H1 (cell line): ENCODE measurements at regions of chr15 and their contacts with region 1.

Region 1: DNA sequence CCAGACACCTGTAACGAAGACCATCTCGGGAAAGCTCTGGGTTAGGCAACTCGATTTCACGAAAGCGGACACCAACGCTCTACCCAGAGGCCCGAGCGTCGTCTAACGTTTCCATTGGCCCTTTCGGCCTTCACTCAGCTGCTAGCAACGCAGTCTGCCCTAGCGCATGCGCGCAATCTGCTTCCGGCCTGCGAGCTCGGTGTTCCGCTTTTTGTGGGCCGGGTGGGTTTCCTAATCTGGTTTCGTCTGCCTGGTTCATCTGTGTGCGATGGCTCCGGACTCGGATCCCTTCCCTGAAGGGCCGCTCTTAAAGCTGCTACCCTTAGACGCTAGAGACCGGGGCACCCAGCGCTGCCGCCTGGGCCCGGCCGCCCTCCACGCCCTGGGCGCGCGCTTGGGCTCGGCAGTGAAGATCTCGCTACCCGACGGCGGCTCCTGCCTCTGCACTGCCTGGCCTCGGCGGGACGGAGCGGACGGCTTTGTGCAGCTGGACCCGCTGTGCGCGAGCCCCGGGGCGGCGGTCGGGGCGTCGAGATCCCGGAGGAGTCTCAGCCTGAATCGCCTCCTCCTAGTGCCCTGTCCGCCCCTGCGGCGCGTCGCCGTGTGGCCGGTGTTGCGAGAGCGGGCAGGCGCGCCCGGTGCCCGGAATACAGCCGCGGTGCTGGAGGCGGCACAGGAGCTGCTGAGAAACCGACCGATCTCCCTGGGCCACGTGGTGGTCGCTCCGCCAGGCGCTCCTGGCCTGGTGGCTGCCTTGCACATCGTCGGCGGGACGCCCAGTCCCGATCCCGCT is 24.0 kb upstream of the GATM start:
- DNase-seq: peak; percentile 93 to 94
- H3K4me3 ChIP-seq: peak overlapping the region; percentile 81 to 99 (median 85)
- H3K27ac ChIP-seq: peak overlapping the region; percentile 88
- H3K4me1 ChIP-seq: peaks cover 0 to 7% (median 0%) of the 10 kb centered on the region in 4 experiments; a peak in 2 of 7 replicates
- H3K27me3 ChIP-seq: no peaks in the 10 kb centered on the region
- CTCF ChIP-seq: no peak
- EP300 ChIP-seq: no peak
- POLR2A ChIP-seq: peak in 1 of 2 experiments; percentile 75; a peak in 2 of 3 replicates
- RAD21 ChIP-seq: no peak

Region 2: DNA sequence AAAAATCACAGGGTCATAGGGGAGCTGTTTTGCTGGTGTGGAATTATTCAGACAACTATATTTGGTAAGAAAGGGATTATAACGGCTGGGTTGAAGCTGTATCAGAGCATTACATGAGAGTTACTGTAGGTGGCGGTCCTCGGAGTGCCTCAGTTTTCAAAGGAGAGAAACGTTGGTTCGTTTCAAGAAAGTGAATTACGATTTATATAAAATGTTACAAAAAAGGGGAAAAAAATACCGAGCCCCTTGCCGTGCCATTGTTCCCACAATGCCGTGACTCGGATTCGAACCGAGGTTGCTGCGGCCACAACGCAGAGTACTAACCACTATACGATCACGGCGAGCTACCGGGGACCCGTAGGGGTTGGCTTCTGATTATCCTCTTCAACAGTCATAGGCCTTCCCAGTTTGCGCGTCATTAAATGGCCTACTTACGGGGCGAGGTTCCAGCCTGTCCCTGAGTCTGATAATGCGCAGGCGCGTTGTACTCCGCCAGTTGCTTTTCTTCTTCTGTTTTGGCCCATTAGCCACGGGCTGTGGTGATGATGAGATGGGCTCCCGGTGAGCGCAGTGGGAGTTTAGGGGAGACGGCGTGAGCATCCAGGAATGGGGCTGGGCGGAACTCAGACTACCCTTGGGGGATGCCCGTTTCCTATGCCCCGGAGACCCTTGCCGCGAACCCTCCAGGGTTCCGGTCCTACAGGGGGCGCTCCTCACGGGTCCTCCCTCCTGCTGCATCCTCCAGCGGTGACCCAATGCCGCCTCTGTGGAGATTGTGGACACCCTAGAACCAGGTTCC is 203.8 kb before region 1 on chr15:
- CTCF ChIA-PET with region 1: interaction called, 97 read pairs
- POLR2A ChIA-PET with region 1: interaction called, 14 read pairs
- DNase-seq: peak in 1 of 2 experiments; percentile 96
- H3K4me3 ChIP-seq: peak overlapping the region; percentile 66 to 100 (median 96)
- H3K27ac ChIP-seq: peak overlapping the region; percentile 50; the same call in 1 of the 2 replicates
- H3K4me1 ChIP-seq: no peaks in the 10 kb centered on the region
- H3K27me3 ChIP-seq: no peaks in the 10 kb centered on the region; a peak in 1 of 7 replicates
- CTCF ChIP-seq: peak; percentile 61 to 84 (median 80)
- EP300 ChIP-seq: no peak
- POLR2A ChIP-seq: peak in 1 of 2 experiments; percentile 41; a peak in 1 of 3 replicates
- RAD21 ChIP-seq: peak; percentile 18 to 32; a peak in 3 of 4 replicates

Region 3: DNA sequence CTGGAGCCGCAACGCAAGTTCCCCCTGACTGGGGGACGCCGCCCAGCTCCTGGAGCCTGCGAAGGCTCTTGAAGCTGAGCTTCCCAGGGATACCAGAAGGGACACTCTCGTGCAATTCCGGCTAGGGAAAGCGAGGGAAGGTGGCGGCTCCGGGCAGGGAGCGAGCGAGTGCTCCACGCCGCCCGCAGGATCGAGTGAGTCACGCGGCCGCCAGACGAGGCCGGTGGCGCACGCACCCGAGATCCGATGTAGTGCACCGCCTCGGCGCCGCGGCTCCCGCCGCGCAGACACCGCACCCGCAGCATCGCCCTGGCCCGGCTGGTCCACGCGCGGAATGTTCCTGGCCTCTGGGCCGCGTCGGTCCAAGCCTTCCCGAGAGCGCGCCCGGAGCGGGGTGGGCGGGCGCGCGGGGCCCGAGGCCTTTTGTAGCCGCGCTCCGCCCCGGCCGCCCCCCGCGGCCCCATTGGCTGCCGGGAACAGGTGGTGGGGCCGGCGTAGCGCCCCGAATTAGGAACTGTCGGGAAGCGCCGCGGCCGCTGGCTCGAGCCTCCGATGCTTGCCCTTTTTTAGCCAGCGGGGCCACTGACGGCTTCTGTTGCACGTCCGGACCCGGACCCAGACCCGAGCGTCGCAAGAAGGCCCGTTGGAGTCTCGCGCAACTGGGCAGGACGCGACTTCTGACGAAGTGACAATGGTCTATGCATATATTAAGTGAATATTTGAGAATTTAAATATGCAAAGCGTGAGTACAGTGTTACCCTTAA is 24.0 kb before region 1 on chr15 and contains the start of gene GATM:
- CTCF ChIA-PET with region 1: interaction called, 60 read pairs
- POLR2A ChIA-PET with region 1: interaction called, 15 read pairs
- DNase-seq: peak in 1 of 2 experiments; percentile 77
- H3K4me3 ChIP-seq: peak within 1 kb of the TSS; percentile 48 to 73 (median 64)
- H3K27ac ChIP-seq: no peak within 1 kb of the TSS
- H3K4me1 ChIP-seq: peaks cover 0 to 2% (median 0%) of the 10 kb centered on the region in 4 experiments; a peak in 2 of 7 replicates
- H3K27me3 ChIP-seq: peaks cover 10 to 40% (median 34%) of the 10 kb centered on the region in 4 experiments
- CTCF ChIP-seq: peak; percentile 42 to 56 (median 45); a peak in 3 of 4 replicates
- EP300 ChIP-seq: no peak
- POLR2A ChIP-seq: peak in 1 of 2 experiments; percentile 64; a peak in 2 of 3 replicates
- RAD21 ChIP-seq: peak in 1 of 2 experiments; percentile 30; a peak in 2 of 4 replicates
- total RNA-seq, gene GATM: 10.0 and 10.2 TPM in 2 replicates

Region 4: GRCh38 chr15:45386420-45386819 is 15.9 kb before region 1 on chr15:
- CTCF ChIA-PET with region 1: interaction called, 60 read pairs
- POLR2A ChIA-PET with region 1: interaction called, 8 read pairs
- DNase-seq: no peak
- H3K4me3 ChIP-seq: no peak overlapping the region
- H3K27ac ChIP-seq: no peak overlapping the region
- H3K4me1 ChIP-seq: no peaks in the 10 kb centered on the region
- H3K27me3 ChIP-seq: no peaks in the 10 kb centered on the region
- CTCF ChIP-seq: no peak
- EP300 ChIP-seq: no peak
- POLR2A ChIP-seq: no peak
- RAD21 ChIP-seq: no peak

Region 5: GRCh38 chr15:45587095-45587860 is 184.9 kb after region 1 on chr15 and contains the start of gene BLOC1S6:
- CTCF ChIA-PET with region 1: interaction called, 3 read pairs
- POLR2A ChIA-PET with region 1: interaction called, 22 read pairs
- DNase-seq: peak; percentile 84 to 94
- H3K4me3 ChIP-seq: peak within 1 kb of the TSS; percentile 79 to 87 (median 83)
- H3K27ac ChIP-seq: peak within 1 kb of the TSS; percentile 98
- H3K4me1 ChIP-seq: peaks cover 3 to 12% (median 7%) of the 10 kb centered on the region in 4 experiments; a peak in 4 of 7 replicates
- H3K27me3 ChIP-seq: no peaks in the 10 kb centered on the region
- CTCF ChIP-seq: no peak
- EP300 ChIP-seq: peak in 1 of 2 experiments; percentile 59; a peak in 1 of 3 replicates
- POLR2A ChIP-seq: peak; percentile 59 to 97
- RAD21 ChIP-seq: no peak
- total RNA-seq, gene BLOC1S6: 28.7 and 28.8 TPM in 2 replicates